ENCODE measurements at regions of chr10 and their contacts with region 1.

Region 1: GRCh38 chr10:122703439-122704118 is 3.9 kb upstream of the C10orf120 start:
- DNase-seq: peak; percentile 68 to 77 (median 76)
- ATAC-seq: peak; percentile 97 to 99 (median 98)
- H3K4me3 ChIP-seq: no peak overlapping the region
- H3K27ac ChIP-seq: no peak overlapping the region
- H3K4me1 ChIP-seq: no peaks in the 10 kb centered on the region
- H3K27me3 ChIP-seq: no peaks in the 10 kb centered on the region
- CTCF ChIP-seq: peak; percentile 77 to 95 (median 93)
- POLR2A ChIP-seq: no peak

Region 2: DNA sequence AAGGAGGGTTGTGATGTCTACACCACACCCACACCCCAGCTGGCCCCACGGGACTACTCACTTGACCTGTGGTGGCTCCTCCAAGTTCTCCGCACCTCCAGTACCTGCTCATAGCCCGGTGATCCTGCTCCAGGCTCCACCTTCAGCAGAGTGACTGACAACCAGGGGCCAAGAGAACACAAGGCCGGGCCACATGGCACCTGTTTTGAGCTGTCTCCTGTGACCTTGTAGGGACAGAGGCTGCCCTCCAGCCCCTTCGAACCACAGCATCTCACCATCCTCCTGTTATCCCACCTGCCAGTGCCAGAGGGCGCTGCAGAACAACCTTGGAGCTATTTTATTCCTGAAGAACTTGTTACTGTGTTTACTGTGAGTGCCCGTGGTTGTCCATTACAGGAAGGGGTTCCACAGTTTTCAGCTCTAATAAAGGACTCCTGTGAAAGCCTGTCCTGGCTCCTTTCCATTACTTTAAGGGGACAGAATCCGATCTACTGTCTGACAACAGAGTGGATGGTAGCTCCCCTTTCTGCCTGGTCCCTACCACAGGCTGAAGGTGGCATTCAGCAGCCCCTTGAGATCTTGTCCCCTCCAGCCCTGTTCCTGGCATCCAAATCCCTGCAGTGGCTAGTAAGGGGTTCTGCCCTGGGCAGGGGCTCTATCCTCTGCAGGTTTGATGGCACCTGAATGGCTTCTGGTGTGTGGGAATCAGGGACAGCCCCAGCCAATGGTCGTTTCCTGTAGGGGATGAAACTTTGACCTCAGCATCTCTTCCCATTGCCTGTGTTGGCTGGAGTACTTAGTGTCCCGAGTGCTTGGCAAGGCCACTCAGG is 54.8 kb before region 1 on chr10:
- intact Hi-C with region 1: loop called in 1 of 2 experiments (anchors 10 kb)
- DNase-seq: no peak
- ATAC-seq: peak; percentile 44 to 84 (median 71)
- H3K4me3 ChIP-seq: no peak overlapping the region
- H3K27ac ChIP-seq: no peak overlapping the region
- H3K4me1 ChIP-seq: no peaks in the 10 kb centered on the region
- H3K27me3 ChIP-seq: no peaks in the 10 kb centered on the region
- CTCF ChIP-seq: peak; percentile 45 to 73 (median 63)
- POLR2A ChIP-seq: no peak

Measured in right lobe of liver (tissue), 6 donors.